Activated B cell treated with CpG ODN at 0.5 μM for 24 hours (primary cell): ENCODE measurements at regions of chr5 and their contacts with region 1.

Region 1: DNA sequence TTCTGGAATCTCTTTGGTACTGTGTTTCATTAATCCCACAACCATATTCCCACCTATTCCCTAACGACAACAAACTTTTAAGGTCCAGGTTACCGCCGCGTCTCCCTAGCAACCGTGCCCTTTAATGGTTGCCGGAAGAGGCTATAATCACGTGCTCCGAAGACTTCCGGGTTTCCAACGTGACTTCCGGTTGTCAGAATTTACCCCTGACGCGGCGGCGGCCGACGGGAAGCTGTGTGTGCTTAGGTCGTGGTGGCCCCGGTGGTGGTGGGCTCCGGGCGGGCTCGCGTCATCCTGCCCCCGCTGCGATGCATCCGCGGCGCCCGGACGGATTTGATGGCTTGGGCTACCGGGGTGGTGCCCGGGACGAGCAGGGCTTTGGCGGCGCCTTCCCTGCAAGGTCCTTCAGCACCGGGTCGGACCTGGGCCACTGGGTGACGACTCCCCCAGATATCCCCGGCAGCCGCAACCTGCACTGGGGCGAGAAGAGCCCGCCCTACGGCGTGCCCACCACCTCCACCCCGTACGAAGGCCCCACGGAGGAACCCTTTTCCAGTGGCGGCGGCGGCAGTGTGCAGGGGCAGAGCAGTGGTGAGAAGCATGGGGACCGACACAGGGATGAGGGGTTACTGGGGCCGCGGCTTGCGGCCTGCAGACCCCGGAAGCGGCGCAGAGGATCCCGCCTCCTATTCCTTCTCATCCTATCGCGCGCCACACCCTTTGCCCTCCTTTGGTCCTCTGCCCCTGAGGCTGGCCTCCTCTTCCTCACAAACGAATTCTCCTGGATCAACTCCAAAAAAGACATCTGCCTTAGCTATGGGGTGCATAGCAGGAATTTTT is at the start of gene SLC25A46:
- DNase-seq: peak; percentile 79
- ATAC-seq: peak; percentile 82
- H3K4me3 Mint-ChIP-seq: peak within 1 kb of the TSS; percentile 97
- H3K27ac Mint-ChIP-seq: peak within 1 kb of the TSS; percentile 96
- H3K4me1 Mint-ChIP-seq: peaks cover 21% of the 10 kb centered on the region
- H3K27me3 Mint-ChIP-seq: peaks cover 3% of the 10 kb centered on the region
- CTCF ChIP-seq: no peak
- total RNA-seq, gene SLC25A46: 39.9 and 42.2 TPM in 2 replicates

Region 2: DNA sequence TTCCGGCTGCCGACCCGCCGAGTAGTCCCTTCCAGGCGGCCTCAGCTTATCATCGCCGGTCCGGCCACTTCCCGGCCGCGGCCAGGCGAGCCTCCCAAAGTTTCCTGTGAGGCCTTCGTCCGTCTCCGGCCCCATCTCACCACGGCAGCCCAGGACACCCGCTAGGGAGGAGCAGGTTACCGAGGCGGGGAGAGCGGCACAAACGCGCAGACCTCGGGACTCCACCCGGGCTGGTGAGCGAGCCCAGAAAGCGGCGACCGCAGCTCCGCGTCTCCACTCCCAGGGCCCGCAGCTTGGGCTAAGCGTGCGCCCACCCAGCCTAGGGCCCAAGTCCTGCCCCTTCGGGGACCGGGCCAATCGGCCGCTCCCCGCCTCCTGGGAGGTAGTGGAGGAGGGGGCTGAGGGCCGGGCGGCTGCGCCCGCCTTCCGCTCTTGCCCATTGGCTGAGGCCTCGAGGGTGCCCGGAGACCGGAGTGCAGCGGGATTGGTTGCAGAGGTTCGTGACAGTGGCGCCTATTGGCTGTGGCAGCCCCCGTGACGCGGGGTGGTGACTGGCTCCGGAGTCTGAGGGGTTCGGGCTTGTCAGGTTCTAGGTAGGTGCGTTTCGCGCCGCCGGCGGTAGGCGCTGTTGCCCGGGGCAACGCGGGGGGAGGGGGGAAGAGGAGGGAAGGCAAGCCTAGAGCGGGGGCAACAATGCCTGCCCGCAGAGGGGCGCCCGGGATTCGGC is 1990.5 kb before region 1 on chr5:
- CTCF ChIA-PET with region 1: no interaction called
- POLR2A ChIA-PET with region 1: interaction called, 3 read pairs
- intact Hi-C with region 1: loop called (anchors 2 kb)
- DNase-seq: peak; percentile 92
- ATAC-seq: peak; percentile 92
- H3K4me3 Mint-ChIP-seq: peak overlapping the region; percentile 92
- H3K27ac Mint-ChIP-seq: peak overlapping the region; percentile 94
- H3K4me1 Mint-ChIP-seq: peaks cover 22% of the 10 kb centered on the region
- H3K27me3 Mint-ChIP-seq: no peaks in the 10 kb centered on the region
- CTCF ChIP-seq: no peak

Region 3: GRCh38 chr5:110371725-110372041 is 367.3 kb before region 1 on chr5:
- CTCF ChIA-PET with region 1: no interaction called
- POLR2A ChIA-PET with region 1: no interaction called
- intact Hi-C with region 1: loop called (anchors 5 kb)
- DNase-seq: no peak
- ATAC-seq: peak; percentile 87
- H3K4me3 Mint-ChIP-seq: peak overlapping the region; percentile 55
- H3K27ac Mint-ChIP-seq: peak overlapping the region; percentile 20
- H3K4me1 Mint-ChIP-seq: peaks cover 22% of the 10 kb centered on the region
- H3K27me3 Mint-ChIP-seq: no peaks in the 10 kb centered on the region
- CTCF ChIP-seq: no peak

Region 4: DNA sequence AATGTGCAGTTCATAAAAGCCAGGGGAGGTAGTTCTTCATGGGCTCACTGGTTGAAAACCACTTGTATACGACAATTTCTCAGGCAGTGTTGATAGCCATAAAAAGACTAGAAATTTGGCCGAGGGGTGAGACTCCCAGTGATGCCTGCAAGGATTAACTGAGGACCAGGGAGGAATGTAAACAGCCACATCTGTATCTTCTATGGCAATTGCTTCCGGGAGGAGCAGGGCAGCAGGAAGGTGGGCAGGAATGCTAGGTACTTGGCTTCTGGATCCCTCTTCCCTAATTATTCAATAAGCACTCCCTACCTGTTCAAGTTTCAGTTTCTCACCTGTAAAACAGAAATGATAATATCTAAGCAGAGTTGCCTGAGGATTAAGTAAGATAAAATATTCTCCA is 57.9 kb before region 1 on chr5:
- CTCF ChIA-PET with region 1: no interaction called
- POLR2A ChIA-PET with region 1: no interaction called
- intact Hi-C with region 1: no loop called
- DNase-seq: no peak
- ATAC-seq: no peak
- H3K4me3 Mint-ChIP-seq: no peak overlapping the region
- H3K27ac Mint-ChIP-seq: no peak overlapping the region
- H3K4me1 Mint-ChIP-seq: no peaks in the 10 kb centered on the region
- H3K27me3 Mint-ChIP-seq: peaks cover 3% of the 10 kb centered on the region
- CTCF ChIP-seq: no peak

Region 5: DNA sequence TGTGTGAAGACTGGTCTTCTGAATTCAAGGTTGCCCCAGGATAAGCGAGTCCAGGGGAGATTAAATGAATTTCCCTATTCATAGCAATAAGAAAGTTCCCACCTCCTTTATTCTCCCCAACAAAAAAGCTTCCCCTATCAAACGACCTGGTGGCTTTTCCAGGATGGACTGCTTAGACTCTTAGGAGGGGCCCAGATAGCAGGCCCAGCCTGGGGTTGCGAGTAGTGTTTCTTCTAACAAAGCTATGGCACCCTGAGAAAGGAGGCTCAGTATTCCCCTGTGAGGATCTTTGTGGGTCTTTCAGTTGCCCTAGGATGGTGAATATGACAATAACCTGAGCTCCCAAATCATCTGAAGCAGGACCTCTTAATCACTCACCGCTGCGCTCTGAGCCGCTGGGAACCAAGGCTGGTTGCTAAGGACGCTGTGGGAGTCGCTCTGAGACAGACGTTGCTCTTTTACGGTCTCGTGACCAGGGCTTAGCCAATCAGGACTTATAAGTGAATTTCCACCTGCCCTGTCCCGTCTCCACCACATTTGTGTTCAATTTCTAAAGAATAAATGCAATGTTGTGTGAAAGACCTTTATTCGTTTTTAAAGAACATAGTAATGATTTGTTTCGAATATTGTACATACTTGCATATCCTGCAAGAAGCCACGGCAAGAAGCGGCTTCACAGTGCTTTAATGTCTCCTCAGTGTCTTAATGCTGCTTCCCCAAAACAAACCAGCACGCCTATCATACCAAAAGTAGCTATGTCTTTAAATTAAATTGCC is 12.6 kb before region 1 on chr5 and contains the start of gene TMEM232:
- CTCF ChIA-PET with region 1: no interaction called
- POLR2A ChIA-PET with region 1: interaction called, 6 read pairs
- intact Hi-C with region 1: loop called (anchors 1 kb)
- DNase-seq: peak; percentile 28
- ATAC-seq: peak; percentile 99
- H3K4me3 Mint-ChIP-seq: peak within 1 kb of the TSS; percentile 85
- H3K27ac Mint-ChIP-seq: no peak within 1 kb of the TSS
- H3K4me1 Mint-ChIP-seq: peaks cover 2% of the 10 kb centered on the region
- H3K27me3 Mint-ChIP-seq: no peaks in the 10 kb centered on the region
- CTCF ChIP-seq: no peak
- total RNA-seq, gene TMEM232: 2.8 and 3.0 TPM in 2 replicates

Region 6: DNA sequence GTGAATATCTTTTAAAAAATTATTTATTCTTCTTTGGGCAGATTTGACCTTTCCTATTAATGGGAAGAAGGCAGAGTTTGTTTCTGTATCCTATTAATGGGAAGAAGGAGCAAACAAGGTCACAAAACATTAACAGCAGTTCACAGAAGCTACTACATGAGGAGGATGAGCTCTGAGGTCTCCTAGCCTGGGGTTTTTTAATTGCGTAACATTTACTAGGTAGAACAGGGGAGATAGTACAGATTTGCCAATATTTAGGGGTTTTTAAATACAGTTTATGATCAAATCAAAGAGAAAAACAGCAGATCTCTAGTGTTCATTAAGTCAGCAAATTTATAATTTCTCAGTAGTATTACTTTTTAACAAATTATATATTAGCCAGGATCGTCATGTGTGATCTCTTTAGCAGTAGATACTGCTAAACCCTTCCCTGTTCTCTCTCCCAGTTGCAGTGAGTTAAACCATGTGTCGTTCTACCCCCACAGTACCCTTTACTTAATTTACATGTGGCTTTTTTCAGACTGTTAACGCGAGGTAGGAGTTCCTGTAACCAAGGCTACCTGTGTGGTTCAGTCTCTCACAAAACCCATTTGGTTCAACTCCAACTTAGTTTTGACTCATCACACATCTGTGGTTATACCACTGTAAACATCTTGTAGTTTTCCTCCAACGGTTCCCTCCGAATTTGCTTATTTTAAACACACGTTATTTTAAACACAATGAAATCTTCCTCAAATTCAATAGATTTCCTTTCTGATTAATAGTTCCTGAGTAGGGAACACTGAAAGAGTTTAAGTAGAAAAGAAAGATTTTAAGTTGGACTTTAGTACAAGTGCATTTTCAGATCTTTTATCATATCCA is 13.1 kb after region 1 on chr5:
- CTCF ChIA-PET with region 1: interaction called, 6 read pairs
- POLR2A ChIA-PET with region 1: interaction called, 5 read pairs
- intact Hi-C with region 1: loop called (anchors 2 kb)
- DNase-seq: no peak
- ATAC-seq: peak; percentile 93
- H3K4me3 Mint-ChIP-seq: no peak overlapping the region
- H3K27ac Mint-ChIP-seq: peak overlapping the region; percentile 51
- H3K4me1 Mint-ChIP-seq: peaks cover 25% of the 10 kb centered on the region
- H3K27me3 Mint-ChIP-seq: no peaks in the 10 kb centered on the region
- CTCF ChIP-seq: no peak

Region 7: GRCh38 chr5:111092062-111092853 is 353.2 kb after region 1 on chr5 and contains the start of gene WDR36:
- CTCF ChIA-PET with region 1: no interaction called
- POLR2A ChIA-PET with region 1: interaction called, 6 read pairs
- intact Hi-C with region 1: loop called (anchors 1 kb)
- DNase-seq: peak; percentile 88
- ATAC-seq: peak; percentile 95
- H3K4me3 Mint-ChIP-seq: peak within 1 kb of the TSS; percentile 96
- H3K27ac Mint-ChIP-seq: peak within 1 kb of the TSS; percentile 90
- H3K4me1 Mint-ChIP-seq: peaks cover 31% of the 10 kb centered on the region
- H3K27me3 Mint-ChIP-seq: peaks cover 6% of the 10 kb centered on the region
- CTCF ChIP-seq: no peak
- total RNA-seq, gene WDR36: 42.6 and 48.6 TPM in 2 replicates